Activated B cell treated with CpG ODN at 0.5 μM for 24 hours (primary cell): ENCODE measurements at regions of chr14 and their contacts with region 1.

Region 1: DNA sequence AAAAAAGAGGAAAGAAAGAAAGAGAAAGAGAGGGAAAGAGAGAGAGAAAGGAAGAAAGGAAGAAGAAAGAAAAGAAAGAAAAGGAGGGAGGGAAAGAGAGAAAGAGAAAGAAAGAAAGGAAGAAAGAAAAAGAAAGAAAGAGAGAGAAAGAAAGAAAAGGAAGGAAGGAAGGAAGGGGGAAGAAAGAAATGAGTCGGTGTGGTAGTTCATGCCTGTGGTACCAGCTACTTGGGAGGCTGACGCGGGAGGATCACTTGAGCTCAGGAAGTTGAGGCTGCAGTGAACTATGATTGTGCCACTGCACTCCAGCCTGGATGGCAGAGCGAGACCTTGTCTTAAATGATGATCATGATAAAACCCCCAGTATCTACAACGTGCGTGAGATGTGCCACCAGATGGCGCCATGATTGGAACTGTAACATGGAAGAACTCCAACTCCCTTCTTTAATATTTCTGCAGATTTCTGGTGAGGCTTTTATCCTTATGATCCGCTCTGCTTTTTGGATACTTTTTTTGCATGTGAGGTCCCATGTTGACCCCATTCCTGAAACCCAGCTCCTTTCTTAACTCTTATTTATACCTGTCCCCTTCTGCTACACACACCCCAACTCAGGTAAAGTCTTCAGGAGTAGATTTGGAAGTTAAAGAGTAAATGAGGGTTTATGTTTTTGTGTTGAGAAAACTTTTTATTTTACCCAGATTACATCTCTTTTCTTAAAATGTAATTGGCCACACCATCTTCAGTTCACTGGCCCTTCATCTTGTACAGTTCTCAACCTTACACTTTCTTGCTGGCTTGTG is 25.6 kb downstream of the RNASE10 start:
- DNase-seq: peak; percentile 39
- ATAC-seq: peak; percentile 76
- H3K4me3 Mint-ChIP-seq: peak overlapping the region; percentile 48
- H3K27ac Mint-ChIP-seq: no peak overlapping the region
- H3K4me1 Mint-ChIP-seq: peaks cover 8% of the 10 kb centered on the region
- H3K27me3 Mint-ChIP-seq: peaks cover 8% of the 10 kb centered on the region
- CTCF ChIP-seq: no peak

Region 2: GRCh38 chr14:20327005-20327869 is 203.7 kb before region 1 on chr14:
- CTCF ChIA-PET with region 1: no interaction called
- POLR2A ChIA-PET with region 1: no interaction called
- intact Hi-C with region 1: loop called (anchors 2 kb)
- DNase-seq: no peak
- ATAC-seq: peak; percentile 49
- H3K4me3 Mint-ChIP-seq: no peak overlapping the region
- H3K27ac Mint-ChIP-seq: peak overlapping the region; percentile 42
- H3K4me1 Mint-ChIP-seq: peaks cover 26% of the 10 kb centered on the region
- H3K27me3 Mint-ChIP-seq: no peaks in the 10 kb centered on the region
- CTCF ChIP-seq: no peak

Region 3: DNA sequence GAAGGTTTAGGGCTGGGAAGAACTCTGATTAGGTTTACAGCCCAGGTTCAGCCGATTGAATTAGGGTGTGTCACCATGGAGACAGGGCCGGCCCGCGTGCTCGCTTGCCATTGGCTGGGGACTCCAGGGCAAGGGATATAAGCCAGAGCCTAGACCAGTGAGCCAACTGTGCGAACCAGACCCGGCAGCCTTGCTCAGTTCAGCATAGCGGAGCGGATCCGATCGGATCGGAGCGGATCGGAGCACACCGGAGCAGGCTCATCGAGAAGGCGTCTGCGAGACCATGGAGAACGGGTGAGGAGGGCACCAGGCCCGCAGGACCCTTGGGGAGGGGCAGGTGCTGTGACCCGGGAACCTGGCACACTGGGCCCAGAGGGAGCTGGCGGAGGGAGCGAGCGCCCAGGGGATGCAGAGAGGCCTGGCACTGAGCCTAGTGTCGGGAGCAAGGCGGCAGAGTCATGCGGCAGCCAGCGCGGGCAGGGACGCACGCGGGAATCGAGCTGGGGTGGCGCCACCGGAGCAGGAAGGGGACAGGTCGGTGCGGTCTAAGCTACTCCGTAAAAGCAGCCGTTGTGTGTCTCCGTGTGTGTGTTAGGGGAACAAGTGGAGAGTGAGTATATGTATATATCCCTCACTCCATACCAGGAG is 61.6 kb before region 1 on chr14 and contains the start of gene PNP:
- CTCF ChIA-PET with region 1: interaction called, 3 read pairs
- POLR2A ChIA-PET with region 1: no interaction called
- intact Hi-C with region 1: loop called (anchors 5 kb)
- DNase-seq: peak; percentile 78
- ATAC-seq: peak; percentile 89
- H3K4me3 Mint-ChIP-seq: peak within 1 kb of the TSS; percentile 95
- H3K27ac Mint-ChIP-seq: peak within 1 kb of the TSS; percentile 93
- H3K4me1 Mint-ChIP-seq: peaks cover 42% of the 10 kb centered on the region
- H3K27me3 Mint-ChIP-seq: no peaks in the 10 kb centered on the region
- CTCF ChIP-seq: no peak
- total RNA-seq, gene PNP: 87.2 and 88.0 TPM in 2 replicates

Region 4: DNA sequence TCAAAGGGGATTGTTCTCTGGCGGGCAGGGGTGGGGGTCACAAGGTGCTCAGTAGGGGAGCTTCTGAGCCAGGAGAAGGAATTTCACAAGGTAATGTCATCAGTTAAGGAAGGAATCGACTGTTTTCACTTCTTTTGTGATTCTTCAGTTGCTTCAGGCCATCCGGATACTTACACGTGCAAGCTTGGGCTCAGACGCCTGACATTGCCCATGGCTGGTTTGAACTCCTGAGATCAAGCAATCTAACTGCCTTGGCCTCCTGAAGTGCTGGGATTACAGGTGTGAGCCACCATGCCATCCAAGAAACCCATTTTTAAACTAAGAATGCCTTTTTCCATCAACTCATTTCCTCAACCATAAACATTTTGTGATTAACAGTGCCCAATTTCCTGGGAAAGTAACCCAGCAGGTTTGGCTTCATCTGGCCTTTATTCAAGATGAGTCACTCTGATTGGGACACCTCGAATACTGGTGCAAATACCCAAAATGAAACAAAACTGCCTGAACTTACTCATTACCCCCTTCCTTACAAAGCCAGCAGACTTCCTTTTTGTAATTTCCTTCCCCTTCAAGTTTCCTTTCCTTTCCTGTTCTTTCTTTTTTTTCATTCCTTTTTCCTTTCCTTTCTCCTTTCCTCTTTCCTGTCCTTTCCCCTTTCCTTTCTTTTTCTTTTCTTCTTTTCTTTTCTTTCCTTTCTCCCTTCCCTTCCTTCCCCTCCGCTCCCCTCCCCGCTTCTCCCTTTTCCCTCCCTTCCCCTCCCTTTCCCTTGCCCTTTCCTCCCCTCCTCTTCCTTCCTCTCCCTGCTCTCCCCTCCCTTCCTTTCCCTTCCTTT is 35.8 kb before region 1 on chr14:
- CTCF ChIA-PET with region 1: no interaction called
- POLR2A ChIA-PET with region 1: no interaction called
- intact Hi-C with region 1: loop called (anchors 5 kb)
- DNase-seq: no peak
- ATAC-seq: no peak
- H3K4me3 Mint-ChIP-seq: no peak overlapping the region
- H3K27ac Mint-ChIP-seq: peak overlapping the region; percentile 18
- H3K4me1 Mint-ChIP-seq: peaks cover 71% of the 10 kb centered on the region
- H3K27me3 Mint-ChIP-seq: no peaks in the 10 kb centered on the region
- CTCF ChIP-seq: no peak

Region 5: DNA sequence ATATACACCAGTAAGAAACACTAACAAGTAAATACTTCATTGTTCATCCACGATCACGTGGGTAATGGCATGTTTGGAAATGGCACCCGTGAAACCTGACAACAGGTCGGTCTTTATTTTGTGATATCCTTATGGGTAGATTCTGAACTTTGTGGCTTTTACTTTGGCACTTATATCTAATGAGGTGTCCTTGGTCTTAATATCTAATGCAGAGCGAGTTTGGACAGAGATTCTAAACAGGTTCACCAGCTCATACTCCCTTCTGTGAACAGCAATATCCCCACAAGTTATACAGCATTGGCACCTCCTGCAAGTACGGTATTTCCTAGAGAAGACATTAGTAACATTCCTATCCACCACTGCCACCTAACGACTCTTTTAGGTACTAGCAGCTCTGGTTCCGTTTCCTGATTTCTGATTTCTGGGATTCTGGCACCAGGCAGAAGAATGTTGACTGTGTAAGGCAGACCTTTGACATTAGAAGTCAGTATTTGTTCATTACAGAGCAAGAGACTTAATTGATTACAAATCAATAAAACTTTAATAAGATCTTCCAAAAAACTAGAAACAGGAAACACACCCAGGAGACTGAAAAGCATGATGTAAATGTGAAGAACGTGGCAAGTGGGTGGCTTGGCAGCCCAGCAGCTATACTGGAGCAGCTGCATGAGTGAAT is 160.0 kb after region 1 on chr14:
- CTCF ChIA-PET with region 1: interaction called, 9 read pairs
- POLR2A ChIA-PET with region 1: no interaction called
- intact Hi-C with region 1: loop called (anchors 1 kb)
- DNase-seq: no peak
- ATAC-seq: peak; percentile 96
- H3K4me3 Mint-ChIP-seq: no peak overlapping the region
- H3K27ac Mint-ChIP-seq: no peak overlapping the region
- H3K4me1 Mint-ChIP-seq: peaks cover 5% of the 10 kb centered on the region
- H3K27me3 Mint-ChIP-seq: no peaks in the 10 kb centered on the region
- CTCF ChIP-seq: peak; percentile 89

Region 6: DNA sequence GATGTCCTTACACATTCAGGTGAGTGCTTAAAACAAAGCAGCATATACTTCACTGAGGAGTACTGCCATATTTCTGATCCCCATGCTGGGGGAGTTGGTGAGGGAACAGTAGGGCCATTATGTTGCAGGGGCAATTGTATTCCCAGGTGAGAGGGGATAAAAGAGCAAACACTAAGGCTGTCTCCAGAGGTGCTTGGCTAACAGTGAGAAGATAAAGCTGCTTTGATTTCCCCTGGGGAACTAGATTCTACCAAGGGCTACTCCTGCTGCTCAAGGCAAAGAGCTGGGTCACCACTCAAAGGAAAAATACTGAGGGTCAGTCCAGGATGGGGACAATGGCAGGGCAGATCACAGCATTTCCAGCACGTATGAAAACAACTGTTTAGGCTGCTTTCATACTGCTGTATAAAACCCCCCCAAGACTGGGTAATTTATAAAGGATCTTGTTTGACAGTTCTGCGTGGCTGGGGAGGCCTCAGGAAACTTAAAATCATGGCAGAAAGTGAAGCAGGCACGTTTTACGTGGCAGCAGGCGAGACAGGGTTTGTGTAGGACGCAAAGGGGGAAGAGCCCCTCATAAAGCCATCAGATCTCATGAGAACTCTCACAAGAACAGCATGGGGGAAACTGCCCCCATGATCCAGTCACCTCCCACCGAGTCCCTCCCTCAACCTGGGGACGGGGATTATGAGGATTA is 672.6 kb after region 1 on chr14:
- CTCF ChIA-PET with region 1: no interaction called
- POLR2A ChIA-PET with region 1: no interaction called
- intact Hi-C with region 1: no loop called
- DNase-seq: no peak
- ATAC-seq: no peak
- H3K4me3 Mint-ChIP-seq: no peak overlapping the region
- H3K27ac Mint-ChIP-seq: peak overlapping the region; percentile 30
- H3K4me1 Mint-ChIP-seq: peaks cover 6% of the 10 kb centered on the region
- H3K27me3 Mint-ChIP-seq: no peaks in the 10 kb centered on the region
- CTCF ChIP-seq: no peak